ENCODE measurements at regions of chr11 and their contacts with region 1.

Region 1: GRCh38 chr11:120335908-120336640 is at the start of gene ARHGEF12:
- DNase-seq: peak; percentile 84 to 97
- ATAC-seq: peak; percentile 67 to 80
- H3K4me3 ChIP-seq: peak within 1 kb of the TSS; percentile 64
- H3K27ac ChIP-seq: peak within 1 kb of the TSS; percentile 84 to 100
- H3K4me1 ChIP-seq: peaks cover 50% of the 10 kb centered on the region
- CTCF ChIP-seq: peak; percentile 62
- EP300 ChIP-seq: no peak
- POLR2A ChIP-seq: peak; percentile 35; the same call in 1 of the 2 replicates
- RAD21 ChIP-seq: peak in 1 of 2 experiments; percentile 39; a peak in 3 of 5 replicates
- polyA plus RNA-seq, gene ARHGEF12: 27.2 and 31.5 TPM in 2 replicates

Region 2: GRCh38 chr11:120400564-120401364 is 64.7 kb after region 1 on chr11:
- CTCF ChIA-PET with region 1: interaction called, 8 read pairs
- POLR2A ChIA-PET with region 1: interaction called, 16 read pairs
- DNase-seq: peak; percentile 19 to 66
- ATAC-seq: peak; percentile 94
- H3K4me3 ChIP-seq: peak overlapping the region; percentile 36
- H3K27ac ChIP-seq: peak overlapping the region; percentile 61 to 68
- H3K4me1 ChIP-seq: peaks cover 54% of the 10 kb centered on the region
- CTCF ChIP-seq: no peak
- EP300 ChIP-seq: no peak
- POLR2A ChIP-seq: no peak
- RAD21 ChIP-seq: no peak

Region 3: GRCh38 chr11:120432056-120433018 is 96.3 kb after region 1 on chr11:
- CTCF ChIA-PET with region 1: interaction called, 13 read pairs
- POLR2A ChIA-PET with region 1: interaction called, 16 read pairs
- DNase-seq: peak; percentile 38 to 85
- ATAC-seq: peak; percentile 98
- H3K4me3 ChIP-seq: peak overlapping the region; percentile 28; the same call in 1 of the 3 replicates
- H3K27ac ChIP-seq: peak overlapping the region; percentile 70 to 75
- H3K4me1 ChIP-seq: peaks cover 42% of the 10 kb centered on the region
- CTCF ChIP-seq: no peak
- EP300 ChIP-seq: no peak
- POLR2A ChIP-seq: no peak
- RAD21 ChIP-seq: 0 out of 5 replicates have a peak, but pooled peaks of 1 of the 2 experiments have one; percentile 15

Measured in A549 (cell line).